ENCODE measurements at regions of chr12 and their contacts with region 1.

Region 1: DNA sequence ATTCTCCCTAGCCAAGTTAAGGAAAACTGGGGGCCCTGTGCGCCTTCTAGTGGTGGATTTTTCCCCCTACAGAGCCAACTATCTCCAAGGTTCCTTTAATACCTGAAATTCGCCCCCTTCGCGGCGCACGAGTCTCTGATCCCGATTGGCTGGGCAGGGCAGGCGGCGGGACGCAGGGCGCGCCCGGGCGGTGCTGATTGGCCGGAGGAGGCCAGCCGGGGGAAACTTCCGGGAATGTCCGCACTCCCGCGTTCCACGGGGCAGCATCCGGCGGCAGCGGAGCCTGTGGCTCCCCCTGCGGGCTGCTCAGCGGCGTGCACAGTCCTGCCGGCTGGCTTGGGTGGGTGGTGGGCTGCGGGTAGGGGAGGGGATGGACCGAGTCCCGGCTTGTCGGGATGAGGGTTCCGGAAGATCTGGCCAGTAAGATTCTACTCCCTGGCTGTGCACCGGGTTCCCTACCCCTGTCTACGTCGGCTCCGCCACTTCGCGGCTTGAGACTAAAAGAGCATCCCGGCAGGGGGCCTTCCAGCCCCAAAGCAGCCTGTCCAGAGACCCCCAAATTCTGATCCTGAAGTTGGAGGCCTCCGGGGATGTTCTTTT is at the start of gene NABP2:
- DNase-seq: peak; percentile 99
- H3K4me3 ChIP-seq: peak within 1 kb of the TSS; percentile 56 to 61
- H3K27ac ChIP-seq: peak within 1 kb of the TSS; percentile 92
- H3K4me1 ChIP-seq: peaks cover 0 to 45% (median 33%) of the 10 kb centered on the region in 4 donors
- H3K27me3 ChIP-seq: no peaks in the 10 kb centered on the region
- CTCF ChIP-seq: peak; percentile 90 to 94

Region 2: GRCh38 chr12:56117778-56118687 is 106.2 kb before region 1 on chr12 and contains the start of gene ZC3H10:
- intact Hi-C with region 1: loop called (anchors 2 kb)
- DNase-seq: peak; percentile 98 to 99
- H3K4me3 ChIP-seq: peak within 1 kb of the TSS; percentile 62 to 75
- H3K27ac ChIP-seq: peak within 1 kb of the TSS; percentile 86 to 94
- H3K4me1 ChIP-seq: peaks cover 0 to 30% (median 24%) of the 10 kb centered on the region in 4 donors
- H3K27me3 ChIP-seq: no peaks in the 10 kb centered on the region
- CTCF ChIP-seq: peak; percentile 35 to 44

Region 3: DNA sequence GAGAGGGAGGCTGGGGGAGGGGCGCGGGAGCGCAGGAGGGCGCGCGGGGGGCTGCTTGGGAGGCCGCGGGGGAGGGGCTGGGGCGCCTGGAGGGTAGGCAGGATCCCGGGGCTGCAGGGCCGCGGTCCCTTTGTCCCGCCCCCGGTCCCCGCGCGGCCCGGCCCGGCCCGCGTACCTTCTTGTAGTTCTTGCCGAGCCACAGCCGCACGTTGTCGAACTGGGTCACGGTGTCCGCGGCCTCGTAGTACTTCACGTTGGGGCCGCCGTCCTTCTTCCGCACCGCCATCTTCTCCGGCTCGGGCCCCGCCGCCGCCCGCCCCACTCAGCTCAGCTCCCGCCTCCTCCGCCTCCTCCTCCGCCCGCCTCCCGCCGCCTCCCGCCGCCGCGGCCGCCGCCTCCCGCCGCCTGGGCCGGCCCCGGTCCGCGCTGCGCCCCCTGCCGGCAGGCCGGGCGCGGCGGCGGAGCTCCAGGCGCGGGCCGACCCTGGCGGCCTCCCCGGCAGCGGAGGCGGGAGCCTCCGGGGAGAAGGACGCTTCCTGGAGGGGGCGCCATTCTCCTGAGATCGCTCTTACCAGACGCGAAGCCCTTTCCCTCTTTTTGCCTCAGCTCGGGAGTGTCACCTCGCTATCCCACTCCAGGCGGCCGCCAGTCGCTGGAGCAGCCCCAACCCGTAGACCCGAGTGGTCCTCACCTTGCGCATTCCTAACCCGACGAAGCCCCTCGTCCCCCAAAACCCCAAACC is 34.9 kb before region 1 on chr12 and contains the start of gene SMARCC2:
- intact Hi-C with region 1: loop called (anchors 2 kb)
- DNase-seq: peak; percentile 86 to 95
- H3K4me3 ChIP-seq: peak within 1 kb of the TSS; percentile 92 to 95
- H3K27ac ChIP-seq: peak within 1 kb of the TSS; percentile 94 to 99
- H3K4me1 ChIP-seq: peaks cover 0 to 28% (median 23%) of the 10 kb centered on the region in 4 donors
- H3K27me3 ChIP-seq: no peaks in the 10 kb centered on the region
- CTCF ChIP-seq: peak; percentile 60 to 94

Region 4: GRCh38 chr12:56258057-56258819 is 34.0 kb after region 1 on chr12 and contains the start of gene ANKRD52:
- intact Hi-C with region 1: no loop called
- DNase-seq: peak; percentile 65 to 84
- H3K4me3 ChIP-seq: peak within 1 kb of the TSS; percentile 91 to 92
- H3K27ac ChIP-seq: peak within 1 kb of the TSS; percentile 80 to 85
- H3K4me1 ChIP-seq: peaks cover 0 to 31% (median 24%) of the 10 kb centered on the region in 4 donors
- H3K27me3 ChIP-seq: no peaks in the 10 kb centered on the region
- CTCF ChIP-seq: peak; percentile 61 to 85

Region 5: DNA sequence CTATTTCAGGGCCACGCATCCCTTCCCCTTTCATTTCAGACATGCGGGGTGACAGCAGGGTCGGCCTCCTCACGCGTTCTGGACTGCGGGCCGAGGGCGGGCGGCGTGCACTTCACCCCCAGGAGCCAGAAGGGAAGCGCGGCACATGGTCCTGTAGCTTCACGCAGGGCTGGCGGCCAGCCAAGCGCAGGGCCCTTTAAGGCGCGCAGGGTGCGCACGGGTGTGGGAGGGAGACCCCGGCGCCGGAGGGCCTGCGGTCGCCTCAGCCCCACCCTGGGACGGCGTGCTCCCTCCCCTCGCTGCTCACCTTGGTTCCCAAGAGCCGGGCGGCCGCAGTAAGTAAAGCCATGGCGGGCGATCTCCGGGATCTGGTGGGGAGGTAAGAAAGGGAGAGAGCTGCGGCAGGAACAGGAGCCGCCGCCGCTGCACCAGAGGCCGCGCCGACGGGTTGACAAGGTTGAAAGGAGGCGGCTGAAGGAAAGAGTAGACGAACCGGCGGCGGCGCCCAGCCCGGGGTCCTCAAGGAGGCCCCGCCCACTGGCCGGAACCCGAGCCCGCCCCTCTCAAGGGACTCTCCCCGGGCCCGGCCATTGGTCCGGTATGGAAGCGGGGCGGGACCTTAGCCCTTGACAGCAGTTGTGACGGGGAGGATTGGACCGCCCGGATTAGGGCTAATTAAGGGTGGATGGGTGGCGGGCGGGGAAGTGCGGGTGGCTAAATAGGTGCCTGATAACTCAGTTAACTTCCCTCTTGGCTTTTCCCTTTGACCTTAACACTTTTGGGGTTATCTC is 75.8 kb after region 1 on chr12 and contains the start of gene CS:
- intact Hi-C with region 1: loop called (anchors 2 kb)
- DNase-seq: peak; percentile 99
- H3K4me3 ChIP-seq: peak within 1 kb of the TSS; percentile 79 to 93
- H3K27ac ChIP-seq: peak within 1 kb of the TSS; percentile 90
- H3K4me1 ChIP-seq: peaks cover 0 to 54% (median 37%) of the 10 kb centered on the region in 4 donors
- H3K27me3 ChIP-seq: no peaks in the 10 kb centered on the region
- CTCF ChIP-seq: no peak

Region 6: DNA sequence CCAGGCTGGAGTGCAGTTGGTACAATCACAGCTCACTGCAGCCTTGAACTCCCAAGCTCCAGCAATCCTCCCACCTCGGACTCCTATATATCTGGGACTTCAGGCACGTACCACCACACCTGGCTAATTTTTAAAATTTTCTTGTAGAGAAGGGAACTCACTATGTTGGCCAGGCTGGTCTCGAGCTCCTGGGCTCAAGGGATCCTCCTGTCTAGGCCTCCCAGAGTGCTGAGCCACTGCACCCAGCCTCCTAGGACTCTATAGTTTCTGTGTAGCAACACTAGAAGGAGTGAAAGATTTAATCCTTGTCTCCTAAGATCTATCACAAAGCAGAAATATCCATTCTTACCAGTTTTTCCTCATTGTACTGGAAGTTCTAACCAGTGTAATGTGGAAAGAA is 142.7 kb after region 1 on chr12:
- intact Hi-C with region 1: no loop called
- DNase-seq: no peak
- H3K4me3 ChIP-seq: no peak overlapping the region
- H3K27ac ChIP-seq: no peak overlapping the region
- H3K4me1 ChIP-seq: no peaks in the 10 kb centered on the region
- H3K27me3 ChIP-seq: no peaks in the 10 kb centered on the region
- CTCF ChIP-seq: no peak

Region 7: GRCh38 chr12:57741844-57742738 is 1517.9 kb after region 1 on chr12:
- intact Hi-C with region 1: no loop called
- DNase-seq: no peak
- H3K4me3 ChIP-seq: no peak overlapping the region
- H3K27ac ChIP-seq: no peak overlapping the region
- H3K4me1 ChIP-seq: peaks cover 15 to 38% (median 32%) of the 10 kb centered on the region in 4 donors
- H3K27me3 ChIP-seq: peaks cover 7 to 51% of the 10 kb centered on the region in 2 donors
- CTCF ChIP-seq: no peak

Measured in tibial artery (tissue), 4 donors.